Transverse colon (tissue), 4 donors: ENCODE measurements at regions of chr3 and their contacts with region 1.

Region 1: GRCh38 chr3:48394391-48394790 is 22.4 kb downstream of the FBXW12 start:
- DNase-seq: no peak
- H3K4me3 ChIP-seq: no peak overlapping the region
- H3K27ac ChIP-seq: no peak overlapping the region
- H3K4me1 ChIP-seq: no peaks in the 10 kb centered on the region
- H3K27me3 ChIP-seq: peaks cover 13% of the 10 kb centered on the region
- CTCF ChIP-seq: no peak
- EP300 ChIP-seq: no peak
- POLR2A ChIP-seq: no peak

Region 2: DNA sequence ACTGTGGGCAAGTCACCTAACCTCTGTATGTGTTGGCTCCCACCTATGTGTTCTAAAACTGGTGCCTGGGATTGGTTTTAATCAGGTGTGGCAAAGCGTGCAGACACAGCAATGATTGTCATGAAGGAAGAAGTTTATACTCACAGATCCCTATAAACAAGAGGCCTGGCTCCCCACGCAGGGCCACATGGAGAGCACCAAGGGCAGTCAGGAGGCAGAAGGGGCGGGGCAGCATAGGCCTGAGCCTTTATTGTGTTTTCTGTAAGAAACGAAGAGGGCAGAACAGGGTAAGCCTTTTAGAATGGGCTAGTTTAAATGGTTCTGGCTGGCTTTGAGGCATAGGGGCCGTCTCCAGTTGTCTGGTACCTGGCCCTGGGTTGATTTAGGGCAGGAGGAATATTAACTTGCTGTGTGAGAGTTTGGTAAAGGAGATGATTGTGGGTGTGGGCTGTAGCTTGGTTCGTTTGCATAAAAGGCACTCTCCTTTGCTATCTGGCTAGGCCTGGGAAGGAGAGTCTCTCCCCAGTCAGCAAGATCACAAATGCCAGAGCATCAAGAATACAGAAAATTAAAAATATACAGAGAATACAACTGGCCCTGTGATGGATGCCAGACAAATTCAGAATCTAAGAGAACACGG is 24.6 kb before region 1 on chr3:
- in situ Hi-C with region 1: no loop called
- intact Hi-C with region 1: loop called (anchors 1 kb)
- DNase-seq: peak; percentile 46
- H3K4me3 ChIP-seq: no peak overlapping the region
- H3K27ac ChIP-seq: no peak overlapping the region
- H3K4me1 ChIP-seq: peaks cover 0 to 5% (median 0%) of the 10 kb centered on the region in 4 donors
- H3K27me3 ChIP-seq: no peaks in the 10 kb centered on the region
- CTCF ChIP-seq: no peak
- EP300 ChIP-seq: no peak
- POLR2A ChIP-seq: no peak

Region 3: GRCh38 chr3:48446425-48447193 is 52.2 kb after region 1 on chr3 and contains the start of gene ATRIP:
- in situ Hi-C with region 1: no loop called
- intact Hi-C with region 1: no loop called
- DNase-seq: peak; percentile 94
- H3K4me3 ChIP-seq: peak within 1 kb of the TSS; percentile 66 to 87 (median 70)
- H3K27ac ChIP-seq: peak within 1 kb of the TSS; percentile 92 to 97 (median 94)
- H3K4me1 ChIP-seq: peaks cover 16 to 23% (median 18%) of the 10 kb centered on the region in 4 donors
- H3K27me3 ChIP-seq: no peaks in the 10 kb centered on the region
- CTCF ChIP-seq: peak in 2 of 5 experiments; percentile 5 to 9
- EP300 ChIP-seq: peak; percentile 10
- POLR2A ChIP-seq: peak; percentile 88
- total RNA-seq, gene ATRIP: 1.8 to 4.4 (median 2.9) TPM

Region 4: DNA sequence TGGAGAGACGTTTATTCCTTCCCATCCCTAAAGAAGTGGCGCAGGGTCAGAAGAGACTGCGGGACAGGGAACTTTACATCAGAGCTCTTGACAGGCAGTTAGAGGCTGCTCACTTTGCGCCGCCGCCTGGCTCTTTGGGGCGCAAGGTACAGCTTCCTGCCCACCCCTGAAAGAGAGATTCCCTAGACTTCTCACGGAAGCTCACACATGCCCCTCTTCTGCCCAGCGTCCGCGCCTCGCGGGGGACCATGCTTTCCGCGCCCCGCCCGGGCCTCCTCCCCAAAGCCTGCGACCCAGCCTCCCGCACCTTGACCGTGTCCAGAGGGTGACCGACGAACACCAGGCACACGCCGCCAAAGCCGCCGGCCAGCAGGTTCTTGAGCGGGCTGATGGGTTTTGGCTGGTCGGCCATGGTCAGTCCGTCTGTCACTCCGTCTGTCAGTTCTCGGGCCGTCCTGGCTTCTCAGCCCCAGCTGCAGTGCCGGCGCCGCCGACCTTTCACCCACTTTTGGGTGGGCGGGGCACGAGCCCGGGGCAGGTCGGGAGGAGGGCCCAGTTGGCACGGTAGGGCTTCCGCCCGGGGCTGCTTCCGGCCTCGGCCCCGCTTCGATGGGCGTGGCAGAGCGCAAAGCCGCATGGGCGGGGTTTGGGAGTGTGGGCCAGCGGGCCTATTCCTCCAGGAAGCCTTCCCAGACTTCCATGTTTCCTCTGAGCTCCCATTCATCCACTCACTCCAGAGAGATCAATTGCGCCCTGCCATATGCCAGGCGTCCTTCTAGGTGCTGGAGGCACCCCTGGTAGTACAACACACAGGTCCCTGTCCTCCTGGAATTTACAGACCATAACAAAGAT is 504.2 kb after region 1 on chr3 and contains the start of gene SLC25A20:
- in situ Hi-C with region 1: no loop called
- intact Hi-C with region 1: no loop called
- DNase-seq: peak; percentile 98
- H3K4me3 ChIP-seq: peak within 1 kb of the TSS; percentile 40 to 70 (median 62)
- H3K27ac ChIP-seq: peak within 1 kb of the TSS; percentile 85 to 92 (median 87)
- H3K4me1 ChIP-seq: peaks cover 8 to 20% (median 16%) of the 10 kb centered on the region in 4 donors
- H3K27me3 ChIP-seq: no peaks in the 10 kb centered on the region
- CTCF ChIP-seq: no peak
- EP300 ChIP-seq: peak; percentile 36
- POLR2A ChIP-seq: peak; percentile 63
- total RNA-seq, gene SLC25A20: 8.4 to 83.8 (median 31.7) TPM